Right ventricle myocardium inferior (tissue), 1 donor: ENCODE measurements at regions of chr5 and their contacts with region 1.

Region 1: DNA sequence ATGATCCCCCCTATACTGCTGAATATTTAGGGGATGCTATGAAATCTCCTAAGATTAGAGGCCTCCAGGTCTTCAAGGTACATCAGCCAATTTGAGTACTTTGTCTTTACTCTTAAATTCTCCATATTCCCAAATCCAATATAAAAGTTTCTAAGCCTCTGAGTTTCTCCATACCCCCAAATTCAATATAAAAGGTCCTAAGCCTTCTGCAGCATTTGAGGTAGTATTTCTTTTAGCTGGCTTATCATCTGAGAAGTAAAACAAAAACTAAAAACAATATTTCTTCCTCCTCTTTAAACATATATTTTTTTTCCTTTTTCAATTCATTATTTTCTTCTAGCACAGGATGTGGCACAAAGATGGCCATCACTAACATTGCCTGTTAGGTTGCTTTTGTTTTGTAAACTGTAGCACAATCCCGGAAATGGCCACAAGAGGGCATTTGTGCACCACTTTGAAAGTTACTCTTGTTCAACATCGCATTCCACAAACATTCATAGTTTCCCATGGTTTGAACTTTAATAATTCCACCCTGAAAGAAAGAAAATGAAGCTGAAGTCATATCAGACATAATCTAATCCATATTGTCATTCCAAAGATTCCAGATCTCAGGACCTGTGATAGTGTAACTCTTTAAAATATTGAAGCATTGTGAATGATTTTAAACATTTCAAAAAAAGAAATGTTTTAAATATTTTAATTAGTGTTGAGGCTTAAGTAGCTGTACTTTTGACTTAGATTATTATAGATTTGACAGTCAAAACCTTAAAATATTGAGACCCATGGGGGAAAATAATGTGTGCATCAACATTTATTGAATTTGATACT is 21.0 kb upstream of the SCGB3A2 start:
- DNase-seq: no peak
- ATAC-seq: no peak

Region 2: GRCh38 chr5:146894753-146895521 is 962.6 kb before region 1 on chr5:
- intact Hi-C with region 1: no loop called
- DNase-seq: no peak
- ATAC-seq: no peak

Region 3: DNA sequence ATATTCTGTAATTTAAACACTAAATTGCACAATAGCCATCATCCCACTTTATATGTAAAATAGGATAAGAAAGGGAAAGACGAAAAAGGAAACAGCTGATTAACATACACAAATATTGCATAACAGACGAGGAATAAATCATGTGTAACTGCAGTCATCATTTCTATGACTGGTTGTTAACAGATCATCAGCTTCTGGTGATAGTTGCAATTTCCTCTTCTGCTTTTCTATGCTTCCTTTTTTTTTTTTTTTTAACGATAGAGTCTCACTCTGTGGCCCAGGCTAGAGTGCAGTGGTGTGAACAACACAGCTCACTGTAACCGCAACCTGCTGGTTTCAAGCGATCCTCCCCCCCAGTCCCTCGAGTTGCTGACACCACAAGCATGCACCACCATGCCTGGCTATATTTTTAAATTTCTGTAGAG is 52.5 kb before region 1 on chr5:
- intact Hi-C with region 1: no loop called
- DNase-seq: peak; percentile 72
- ATAC-seq: peak; percentile 42

Region 4: DNA sequence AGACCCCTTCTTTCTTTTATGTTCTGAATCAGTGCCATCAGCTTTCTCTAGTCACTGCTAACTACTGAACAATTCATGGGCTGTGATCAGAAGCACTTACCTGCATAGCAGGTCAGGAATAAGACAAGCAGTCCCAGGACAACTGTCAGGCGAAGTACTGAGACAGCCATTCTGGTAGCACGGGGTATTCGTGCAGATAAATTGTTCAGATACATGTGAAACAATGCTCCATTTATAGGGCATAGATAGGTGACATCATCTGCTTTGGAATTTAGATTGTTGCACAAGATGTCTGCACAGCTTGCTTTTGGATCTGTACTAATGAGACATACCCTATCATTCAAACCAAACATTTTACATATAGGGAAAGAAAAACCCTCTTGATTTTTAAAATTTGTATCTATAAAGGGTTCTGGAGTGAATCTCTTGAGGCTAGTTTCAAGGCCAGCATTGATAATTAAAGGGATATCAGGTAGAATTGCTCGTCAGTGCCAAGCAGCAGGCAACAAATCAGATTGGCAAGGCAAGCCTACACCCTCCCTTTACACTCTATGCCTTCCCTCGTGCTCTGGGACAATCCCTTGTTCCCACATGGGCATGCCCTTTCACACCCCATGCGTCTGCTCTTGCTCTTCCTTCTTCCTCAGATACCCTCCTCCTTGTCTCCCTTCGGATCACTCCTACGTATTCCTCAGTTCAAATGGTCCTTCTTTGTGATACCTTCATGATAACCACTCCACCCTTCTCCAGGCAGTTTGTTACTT is 49.0 kb after region 1 on chr5 and contains the start of gene C5orf46:
- intact Hi-C with region 1: no loop called
- DNase-seq: no peak
- ATAC-seq: peak; percentile 26
- total RNA-seq, gene C5orf46: 2.4 TPM

Region 5: DNA sequence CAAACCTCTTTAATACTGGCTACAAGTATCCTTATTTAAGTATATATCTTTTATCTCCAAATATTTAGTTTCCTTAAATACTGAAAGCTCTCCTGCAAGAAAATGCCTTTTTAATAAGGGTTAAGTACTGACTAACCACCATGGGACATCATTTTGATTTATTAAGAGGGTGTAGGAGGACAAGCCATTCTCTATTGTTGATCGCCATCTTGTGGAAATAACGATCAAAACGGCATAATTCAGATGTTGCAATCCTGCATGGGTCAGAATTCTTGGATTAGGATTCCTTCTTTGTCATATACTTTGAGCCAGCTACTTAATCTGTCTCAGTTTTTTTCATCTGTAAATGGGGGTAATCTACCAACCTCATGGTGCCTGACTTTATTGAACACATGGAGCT is 77.5 kb after region 1 on chr5:
- intact Hi-C with region 1: loop called (anchors 2 kb)
- DNase-seq: no peak
- ATAC-seq: peak; percentile 73

Region 6: GRCh38 chr5:148063861-148064260 is 206.3 kb after region 1 on chr5 and contains the start of gene SPINK5:
- intact Hi-C with region 1: no loop called
- DNase-seq: no peak
- ATAC-seq: no peak
- total RNA-seq, gene SPINK5: 1.1 TPM

Region 7: DNA sequence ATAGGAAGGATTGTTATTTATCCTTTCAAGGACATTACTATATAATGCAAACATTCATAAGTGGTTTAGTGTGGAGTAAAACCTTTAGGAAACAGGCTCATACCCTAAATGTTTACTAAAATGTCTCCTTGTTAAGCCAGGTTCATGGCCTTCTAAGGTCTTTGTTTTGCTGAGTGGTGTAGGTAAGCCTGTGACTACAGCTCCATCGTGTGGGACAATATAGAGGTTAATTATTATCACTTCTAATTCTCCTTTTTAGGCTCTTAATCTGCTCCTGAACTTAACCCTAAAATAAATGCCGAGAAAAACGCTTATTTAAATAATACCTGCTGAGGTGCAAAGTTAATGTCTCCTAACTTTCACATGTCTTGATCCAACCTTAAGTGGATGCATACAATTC is 250.1 kb after region 1 on chr5:
- intact Hi-C with region 1: loop called (anchors 10 kb)
- DNase-seq: no peak
- ATAC-seq: no peak